Calu3 (cell line): ENCODE measurements at regions of chr3 and their contacts with region 1.

Region 1: DNA sequence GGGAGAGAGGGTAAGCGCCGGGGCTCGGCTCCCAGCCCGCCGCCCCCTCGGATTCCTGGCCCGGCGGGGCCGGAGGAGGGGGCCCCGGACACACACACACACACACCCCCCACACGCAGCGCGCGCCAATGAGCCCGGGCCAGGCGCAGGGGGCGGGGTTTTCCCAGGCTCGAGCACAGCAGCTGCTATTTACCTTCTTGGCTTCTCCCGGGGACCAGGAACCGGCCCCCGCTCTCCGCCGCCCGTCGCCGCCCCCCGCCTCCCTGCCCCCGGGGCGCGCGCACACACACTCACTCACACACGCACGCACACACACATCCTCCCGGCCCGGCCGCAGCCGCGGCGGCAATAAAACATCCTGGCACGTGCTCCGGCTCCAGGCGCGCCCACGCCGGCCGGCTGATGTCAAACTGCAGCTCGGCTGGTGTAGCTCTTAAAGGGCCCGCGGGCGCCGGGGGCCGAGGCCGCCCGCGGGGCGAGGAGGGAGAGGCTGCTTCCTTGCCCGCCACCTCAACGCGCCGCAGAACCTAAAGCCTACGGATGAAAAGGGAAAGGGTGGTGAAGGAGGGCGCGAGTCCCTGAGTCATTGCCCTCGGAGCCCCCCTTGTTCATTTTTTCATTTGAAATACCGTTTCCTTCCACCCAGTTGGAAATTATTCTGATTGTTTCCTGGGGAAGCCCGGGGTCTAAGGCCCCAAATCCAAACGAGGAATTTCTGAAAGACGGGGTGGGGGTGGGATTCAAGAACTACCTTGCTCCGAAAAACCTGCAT is 1.0 kb upstream of the HES1 start:
- DNase-seq: peak; percentile 100
- H3K4me3 Mint-ChIP-seq: peak overlapping the region; percentile 92
- H3K27ac Mint-ChIP-seq: peak overlapping the region; percentile 83
- H3K4me1 Mint-ChIP-seq: peaks cover 52% of the 10 kb centered on the region
- H3K27me3 Mint-ChIP-seq: no peaks in the 10 kb centered on the region
- CTCF ChIP-seq: no peak

Region 2: GRCh38 chr3:193831495-193832455 is 303.2 kb before region 1 on chr3:
- CTCF ChIA-PET with region 1: interaction called, 11 read pairs
- intact Hi-C with region 1: no loop called
- DNase-seq: peak; percentile 79
- H3K4me3 Mint-ChIP-seq: peak overlapping the region; percentile 11
- H3K27ac Mint-ChIP-seq: peak overlapping the region; percentile 90
- H3K4me1 Mint-ChIP-seq: peaks cover 98% of the 10 kb centered on the region
- H3K27me3 Mint-ChIP-seq: no peaks in the 10 kb centered on the region
- CTCF ChIP-seq: no peak

Region 3: GRCh38 chr3:193946945-193947344 is 188.0 kb before region 1 on chr3:
- CTCF ChIA-PET with region 1: interaction called, 4 read pairs
- intact Hi-C with region 1: loop called (anchors 10 kb)
- DNase-seq: peak; percentile 72
- H3K4me3 Mint-ChIP-seq: no peak overlapping the region
- H3K27ac Mint-ChIP-seq: peak overlapping the region; percentile 52
- H3K4me1 Mint-ChIP-seq: peaks cover 42% of the 10 kb centered on the region
- H3K27me3 Mint-ChIP-seq: no peaks in the 10 kb centered on the region
- CTCF ChIP-seq: no peak

Region 4: DNA sequence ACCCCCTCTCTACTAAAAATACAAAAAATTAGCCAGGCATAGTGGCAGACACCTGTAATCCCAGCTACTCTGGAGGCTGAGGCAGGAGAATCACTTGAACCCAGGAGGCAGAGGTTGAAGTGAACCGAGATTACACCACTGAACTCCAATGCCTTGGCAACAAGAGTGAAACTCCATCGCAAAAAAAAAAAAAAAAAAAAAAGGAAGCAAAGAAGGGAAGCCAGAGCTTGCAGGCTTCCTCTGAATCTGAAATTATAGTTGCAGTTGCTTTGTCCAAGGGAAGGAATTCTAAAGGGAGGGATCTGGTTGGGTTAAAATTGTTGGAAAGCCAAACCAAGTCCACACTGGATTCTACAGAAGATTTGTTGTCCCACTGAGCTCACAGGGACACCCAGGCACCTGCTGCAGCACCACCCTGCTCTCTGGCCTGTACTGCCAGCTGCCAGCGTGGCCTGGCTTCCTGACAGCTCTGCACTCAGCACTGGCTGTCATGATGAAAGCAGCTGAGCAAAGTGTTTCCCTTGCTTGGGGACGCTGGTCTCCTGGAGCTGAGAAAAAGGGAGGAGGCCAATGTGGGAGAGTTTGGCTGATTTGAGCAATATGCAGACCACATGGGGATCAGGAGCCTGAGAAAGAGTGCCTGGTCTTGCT is 87.8 kb before region 1 on chr3:
- CTCF ChIA-PET with region 1: no interaction called
- intact Hi-C with region 1: no loop called
- DNase-seq: no peak
- H3K4me3 Mint-ChIP-seq: no peak overlapping the region
- H3K27ac Mint-ChIP-seq: no peak overlapping the region
- H3K4me1 Mint-ChIP-seq: no peaks in the 10 kb centered on the region
- H3K27me3 Mint-ChIP-seq: no peaks in the 10 kb centered on the region
- CTCF ChIP-seq: no peak

Region 5: DNA sequence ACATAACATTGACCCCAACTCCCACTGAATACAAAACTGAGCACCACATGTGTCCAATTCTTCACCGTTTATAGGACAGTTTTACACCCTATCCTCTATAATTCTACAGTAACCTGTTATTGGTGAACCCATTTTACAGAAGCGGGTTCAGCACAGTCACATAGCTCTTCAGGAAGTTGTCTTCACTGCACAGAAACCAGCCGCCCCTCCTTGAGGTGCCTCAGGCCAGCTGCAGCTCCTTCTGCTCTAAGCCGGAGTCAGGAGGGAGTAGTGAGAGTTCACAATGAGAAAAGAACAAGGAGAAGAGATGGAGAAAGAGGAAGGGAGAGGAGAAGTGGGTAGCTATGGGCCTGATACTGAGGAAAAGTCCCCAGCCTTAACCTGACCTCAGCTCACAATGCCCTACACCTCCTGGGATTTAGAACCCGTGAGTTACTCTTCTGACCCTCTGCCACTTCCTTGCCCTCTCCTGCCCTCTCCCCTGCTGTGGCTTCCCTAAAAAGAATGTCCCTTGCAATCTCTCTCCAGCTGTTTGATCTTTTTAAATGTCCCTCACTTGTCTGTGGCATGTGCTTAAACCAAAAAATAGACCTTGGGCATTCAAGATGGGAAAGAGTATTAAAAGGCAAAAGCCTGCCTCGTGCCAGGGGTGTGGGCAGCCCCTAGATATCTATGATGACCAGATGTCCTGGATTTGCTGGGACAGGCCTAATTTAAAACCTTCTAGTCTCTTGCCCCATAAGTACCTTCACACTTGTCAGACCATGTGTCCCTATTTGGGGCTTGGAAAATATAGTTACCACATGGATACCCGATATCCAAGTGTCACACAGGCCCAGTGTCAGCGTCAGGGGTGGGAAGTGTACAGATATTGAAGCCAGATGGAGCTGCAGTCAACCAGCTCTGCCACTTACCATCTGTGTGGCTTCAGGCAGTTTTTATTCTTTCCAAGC is 70.3 kb before region 1 on chr3:
- CTCF ChIA-PET with region 1: interaction called, 3 read pairs
- intact Hi-C with region 1: loop called (anchors 2 kb)
- DNase-seq: no peak
- H3K4me3 Mint-ChIP-seq: no peak overlapping the region
- H3K27ac Mint-ChIP-seq: no peak overlapping the region
- H3K4me1 Mint-ChIP-seq: peaks cover 42% of the 10 kb centered on the region
- H3K27me3 Mint-ChIP-seq: no peaks in the 10 kb centered on the region
- CTCF ChIP-seq: no peak

Region 6: GRCh38 chr3:194112120-194113106 is 22.5 kb before region 1 on chr3:
- CTCF ChIA-PET with region 1: interaction called, 11 read pairs
- intact Hi-C with region 1: loop called (anchors 1 kb)
- DNase-seq: peak; percentile 89
- H3K4me3 Mint-ChIP-seq: peak overlapping the region; percentile 33
- H3K27ac Mint-ChIP-seq: peak overlapping the region; percentile 55
- H3K4me1 Mint-ChIP-seq: peaks cover 65% of the 10 kb centered on the region
- H3K27me3 Mint-ChIP-seq: peaks cover 11% of the 10 kb centered on the region
- CTCF ChIP-seq: no peak

Region 7: DNA sequence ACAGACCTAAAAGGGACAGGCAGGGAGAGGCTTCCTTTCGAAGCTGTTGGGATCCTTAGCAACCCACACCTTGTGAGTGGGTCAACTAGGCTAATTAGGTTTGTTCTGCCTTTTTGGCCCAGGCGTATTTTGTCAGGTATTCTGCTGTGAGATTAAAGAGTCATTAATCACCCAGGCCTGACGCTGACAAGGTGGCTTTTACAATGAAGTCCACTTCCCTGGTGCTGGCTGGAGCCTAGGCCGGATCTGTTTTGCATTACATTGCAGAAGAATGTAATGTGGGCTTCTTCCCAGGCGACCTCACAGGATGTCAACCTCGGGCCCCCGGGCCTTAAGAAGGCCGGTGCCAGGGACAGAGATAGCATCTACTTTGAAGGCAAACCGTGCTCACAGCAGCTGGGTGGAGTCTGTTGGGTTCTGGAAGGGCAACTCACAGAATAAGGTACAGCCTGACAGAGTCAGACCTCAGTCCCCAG is 77.9 kb after region 1 on chr3:
- CTCF ChIA-PET with region 1: no interaction called
- intact Hi-C with region 1: no loop called
- DNase-seq: no peak
- H3K4me3 Mint-ChIP-seq: no peak overlapping the region
- H3K27ac Mint-ChIP-seq: no peak overlapping the region
- H3K4me1 Mint-ChIP-seq: no peaks in the 10 kb centered on the region
- H3K27me3 Mint-ChIP-seq: no peaks in the 10 kb centered on the region
- CTCF ChIP-seq: no peak